A549 (cell line): ENCODE measurements at regions of chr12 and their contacts with region 1.

Region 1: GRCh38 chr12:6335451-6336078 is 6.3 kb downstream of the TNFRSF1A start:
- DNase-seq: peak; percentile 86 to 88
- ATAC-seq: peak; percentile 40 to 43
- H3K4me3 ChIP-seq: peak overlapping the region; percentile 26
- H3K27ac ChIP-seq: peak overlapping the region; percentile 95 to 98
- H3K4me1 ChIP-seq: peaks cover 80% of the 10 kb centered on the region
- CTCF ChIP-seq: peak; percentile 47
- EP300 ChIP-seq: no peak
- POLR2A ChIP-seq: peak; percentile 26
- RAD21 ChIP-seq: peak; percentile 58 to 66; a peak in 4 of 5 replicates

Region 2: DNA sequence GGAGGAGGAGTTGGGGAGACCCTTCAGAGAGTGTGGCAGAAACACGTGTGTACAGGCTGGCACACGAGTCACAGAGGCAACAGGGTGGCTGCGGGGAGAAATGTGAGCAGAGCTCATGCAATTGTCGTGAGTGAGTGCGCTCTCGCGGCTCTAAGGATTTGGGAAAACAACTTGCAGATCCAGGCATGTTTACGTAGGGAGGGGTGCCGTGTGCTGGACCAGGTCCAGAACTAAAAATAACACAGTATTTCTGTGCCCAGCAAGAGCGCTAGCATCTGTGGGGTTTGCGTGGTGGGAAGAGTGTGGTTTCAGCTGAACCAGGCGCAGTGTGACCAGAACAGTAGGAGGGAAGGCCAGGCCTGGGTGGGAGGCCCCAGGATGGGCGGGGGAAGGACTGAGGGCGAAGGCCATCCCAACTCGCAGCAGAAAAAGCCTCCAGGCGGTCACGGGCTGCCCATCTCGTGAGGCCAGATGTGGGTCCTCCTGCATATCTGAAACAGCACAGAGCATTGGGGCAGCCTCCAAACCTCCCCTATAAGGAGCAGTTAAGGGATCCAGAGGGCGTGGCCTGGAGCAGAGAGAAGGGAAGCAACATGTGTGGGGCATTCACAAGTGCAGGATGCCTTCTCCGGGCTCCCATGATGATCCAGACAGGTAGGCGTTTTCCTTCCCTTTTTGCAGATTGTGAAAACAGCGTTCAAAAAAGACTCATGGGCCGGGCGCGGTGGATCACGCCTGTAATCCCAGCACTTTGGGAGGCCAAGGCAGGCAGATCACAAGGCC is 153.3 kb before region 1 on chr12:
- CTCF ChIA-PET with region 1: no interaction called
- POLR2A ChIA-PET with region 1: no interaction called
- DNase-seq: no peak
- ATAC-seq: no peak; a peak in 1 of 6 replicates
- H3K4me3 ChIP-seq: no peak overlapping the region
- H3K27ac ChIP-seq: no peak overlapping the region
- H3K4me1 ChIP-seq: peaks cover 19% of the 10 kb centered on the region
- CTCF ChIP-seq: no peak
- EP300 ChIP-seq: no peak
- POLR2A ChIP-seq: no peak
- RAD21 ChIP-seq: no peak

Region 3: GRCh38 chr12:6376079-6376869 is 40.7 kb after region 1 on chr12:
- CTCF ChIA-PET with region 1: interaction called, 705 read pairs
- POLR2A ChIA-PET with region 1: interaction called, 141 read pairs
- DNase-seq: peak; percentile 78 to 86
- ATAC-seq: peak; percentile 73 to 77
- H3K4me3 ChIP-seq: no peak overlapping the region
- H3K27ac ChIP-seq: peak overlapping the region; percentile 97 to 99
- H3K4me1 ChIP-seq: peaks cover 71% of the 10 kb centered on the region
- CTCF ChIP-seq: peak; percentile 27
- EP300 ChIP-seq: no peak
- POLR2A ChIP-seq: no peak
- RAD21 ChIP-seq: peak in 1 of 2 experiments; percentile 26; a peak in 3 of 5 replicates

Region 4: GRCh38 chr12:6392504-6393077 is 57.0 kb after region 1 on chr12:
- CTCF ChIA-PET with region 1: interaction called, 15 read pairs
- POLR2A ChIA-PET with region 1: interaction called, 4 read pairs
- DNase-seq: peak in 1 of 2 experiments; percentile 89
- ATAC-seq: peak; percentile 48 to 80; a peak in 4 of 6 replicates
- H3K4me3 ChIP-seq: no peak overlapping the region
- H3K27ac ChIP-seq: peak overlapping the region; percentile 69 to 74
- H3K4me1 ChIP-seq: peaks cover 53% of the 10 kb centered on the region
- CTCF ChIP-seq: no peak
- EP300 ChIP-seq: no peak
- POLR2A ChIP-seq: no peak
- RAD21 ChIP-seq: 0 out of 5 replicates have a peak, but pooled peaks of 1 of the 2 experiments have one; percentile 2

Region 5: DNA sequence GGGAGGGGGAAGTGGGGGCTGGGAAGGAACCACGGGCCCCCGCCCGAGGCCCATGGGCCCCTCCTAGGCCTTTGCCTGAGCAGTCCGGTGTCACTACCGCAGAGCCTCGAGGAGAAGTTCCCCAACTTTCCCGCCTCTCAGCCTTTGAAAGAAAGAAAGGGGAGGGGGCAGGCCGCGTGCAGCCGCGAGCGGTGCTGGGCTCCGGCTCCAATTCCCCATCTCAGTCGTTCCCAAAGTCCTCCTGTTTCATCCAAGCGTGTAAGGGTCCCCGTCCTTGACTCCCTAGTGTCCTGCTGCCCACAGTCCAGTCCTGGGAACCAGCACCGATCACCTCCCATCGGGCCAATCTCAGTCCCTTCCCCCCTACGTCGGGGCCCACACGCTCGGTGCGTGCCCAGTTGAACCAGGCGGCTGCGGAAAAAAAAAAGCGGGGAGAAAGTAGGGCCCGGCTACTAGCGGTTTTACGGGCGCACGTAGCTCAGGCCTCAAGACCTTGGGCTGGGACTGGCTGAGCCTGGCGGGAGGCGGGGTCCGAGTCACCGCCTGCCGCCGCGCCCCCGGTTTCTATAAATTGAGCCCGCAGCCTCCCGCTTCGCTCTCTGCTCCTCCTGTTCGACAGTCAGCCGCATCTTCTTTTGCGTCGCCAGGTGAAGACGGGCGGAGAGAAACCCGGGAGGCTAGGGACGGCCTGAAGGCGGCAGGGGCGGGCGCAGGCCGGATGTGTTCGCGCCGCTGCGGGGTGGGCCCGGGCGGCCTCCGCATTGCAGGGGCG is 198.5 kb after region 1 on chr12 and contains the start of gene GAPDH:
- CTCF ChIA-PET with region 1: interaction called, 12 read pairs
- POLR2A ChIA-PET with region 1: interaction called, 25 read pairs
- DNase-seq: peak; percentile 90 to 99
- ATAC-seq: peak; percentile 54 to 73
- H3K4me3 ChIP-seq: peak within 1 kb of the TSS; percentile 97
- H3K27ac ChIP-seq: peak within 1 kb of the TSS; percentile 97 to 100
- H3K4me1 ChIP-seq: peaks cover 51% of the 10 kb centered on the region
- CTCF ChIP-seq: no peak
- EP300 ChIP-seq: no peak
- POLR2A ChIP-seq: peak; percentile 99
- RAD21 ChIP-seq: no peak; a peak in 1 of 5 replicates
- polyA plus RNA-seq, gene GAPDH: 10,036 and 10,800 TPM in 2 replicates